ENCODE measurements at regions of chr18 and their contacts with region 1.

Region 1: GRCh38 chr18:49858309-49859020 is 45.1 kb upstream of the ACAA2 start:
- DNase-seq: peak in 4 of 5 donors; percentile 48 to 82 (median 56)
- ATAC-seq: peak; percentile 45 to 79 (median 57)
- H3K4me3 ChIP-seq: no peak overlapping the region
- H3K27ac ChIP-seq: no peak overlapping the region
- H3K4me1 ChIP-seq: peaks cover 0 to 5% (median 0%) of the 10 kb centered on the region in 12 donors
- H3K27me3 ChIP-seq: peaks cover 0 to 4% (median 0%) of the 10 kb centered on the region in 9 donors
- CTCF ChIP-seq: peak; percentile 75 to 96 (median 90)
- POLR2A ChIP-seq: no peak

Region 2: DNA sequence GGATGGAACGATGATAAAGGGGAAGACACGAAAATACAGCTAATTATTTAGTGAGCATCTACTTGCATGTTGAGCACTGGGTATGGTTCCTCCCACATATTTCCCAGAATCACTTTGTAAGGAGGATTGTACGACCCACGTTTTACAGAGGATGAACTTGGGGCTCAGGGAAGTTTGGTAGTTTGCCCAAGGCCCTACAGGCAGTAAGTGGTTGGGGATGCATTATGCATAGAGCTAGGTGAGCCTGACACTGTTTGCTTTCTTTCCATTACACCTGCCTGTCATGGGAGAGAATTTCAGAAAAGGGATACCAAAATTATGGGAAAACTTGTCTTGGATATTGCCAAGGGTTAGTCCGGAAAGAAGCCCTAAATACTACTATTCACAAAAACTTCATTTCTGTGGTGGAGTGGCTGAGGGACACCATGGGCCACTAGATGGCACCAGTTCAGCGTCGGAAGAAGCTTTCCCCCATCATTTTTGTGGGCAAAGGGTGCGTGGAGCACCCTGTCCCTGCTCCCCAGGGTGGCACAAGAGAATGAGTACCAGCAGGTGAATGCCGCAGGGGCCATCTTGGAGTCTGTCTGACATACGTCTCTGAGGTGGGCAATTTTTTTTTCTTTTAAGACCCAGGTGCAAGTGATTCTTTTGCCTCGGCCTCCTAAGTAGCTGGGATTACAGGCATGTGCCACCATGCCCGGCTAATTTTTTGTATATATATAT is 347.9 kb before region 1 on chr18:
- intact Hi-C with region 1: loop called (anchors 1 to 5 kb)
- DNase-seq: peak in 4 of 5 donors; percentile 31 to 64 (median 42)
- ATAC-seq: peak in 3 of 4 donors; percentile 52 to 72 (median 66)
- H3K4me3 ChIP-seq: no peak overlapping the region
- H3K27ac ChIP-seq: no peak overlapping the region
- H3K4me1 ChIP-seq: no peaks in the 10 kb centered on the region
- H3K27me3 ChIP-seq: peaks cover 0 to 6% (median 0%) of the 10 kb centered on the region in 9 donors
- CTCF ChIP-seq: peak; percentile 71 to 87 (median 81)
- POLR2A ChIP-seq: no peak

Region 3: GRCh38 chr18:49550621-49551339 is 307.7 kb before region 1 on chr18:
- intact Hi-C with region 1: loop called in 1 of 10 experiments (anchors 5 kb)
- DNase-seq: no peak
- ATAC-seq: no peak
- H3K4me3 ChIP-seq: no peak overlapping the region
- H3K27ac ChIP-seq: no peak overlapping the region
- H3K4me1 ChIP-seq: no peaks in the 10 kb centered on the region
- H3K27me3 ChIP-seq: peaks cover 0 to 18% (median 0%) of the 10 kb centered on the region in 9 donors
- CTCF ChIP-seq: no peak
- POLR2A ChIP-seq: no peak

Region 4: GRCh38 chr18:49561289-49562193 is 296.9 kb before region 1 on chr18 and contains the start of gene LIPG:
- intact Hi-C with region 1: loop called (anchors 1 to 5 kb)
- DNase-seq: peak in 4 of 5 donors; percentile 10 to 69 (median 36)
- ATAC-seq: peak in 3 of 4 donors; percentile 35 to 72 (median 45)
- H3K4me3 ChIP-seq: peak within 1 kb of the TSS; percentile 11 to 55 (median 40)
- H3K27ac ChIP-seq: no peak within 1 kb of the TSS
- H3K4me1 ChIP-seq: peaks cover 3 to 35% (median 21%) of the 10 kb centered on the region in 12 donors
- H3K27me3 ChIP-seq: peaks cover 12 to 53% (median 38%) of the 10 kb centered on the region in 9 donors
- CTCF ChIP-seq: no peak
- POLR2A ChIP-seq: no peak
- total RNA-seq, gene LIPG: 0.20 to 12.1 (median 1.1) TPM in 6 of 9 donors, not detected in the others

Region 5: DNA sequence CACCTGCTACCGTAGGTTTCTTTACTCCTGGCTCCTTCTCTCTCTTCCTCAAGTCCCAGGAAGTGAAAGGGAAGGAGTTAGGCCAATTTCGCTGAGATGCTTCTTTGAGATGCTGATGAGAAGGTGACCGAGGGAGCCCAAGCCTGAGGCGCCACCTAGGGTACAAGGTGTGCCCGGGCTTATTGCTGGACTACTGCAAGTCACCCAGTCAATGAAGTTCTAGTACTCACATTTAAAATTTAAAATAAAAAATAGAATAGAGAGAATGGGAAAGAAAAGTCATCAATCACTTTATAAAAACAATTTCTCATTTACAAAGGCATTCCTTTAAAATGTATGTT is 90.4 kb before region 1 on chr18:
- intact Hi-C with region 1: loop called in 2 of 10 experiments (anchors 10 kb)
- DNase-seq: peak in 2 of 5 donors; percentile 30 to 50
- ATAC-seq: peak; percentile 51 to 74 (median 64)
- H3K4me3 ChIP-seq: no peak overlapping the region
- H3K27ac ChIP-seq: no peak overlapping the region
- H3K4me1 ChIP-seq: no peaks in the 10 kb centered on the region
- H3K27me3 ChIP-seq: no peaks in the 10 kb centered on the region
- CTCF ChIP-seq: peak; percentile 20 to 60 (median 45)
- POLR2A ChIP-seq: no peak

Region 6: DNA sequence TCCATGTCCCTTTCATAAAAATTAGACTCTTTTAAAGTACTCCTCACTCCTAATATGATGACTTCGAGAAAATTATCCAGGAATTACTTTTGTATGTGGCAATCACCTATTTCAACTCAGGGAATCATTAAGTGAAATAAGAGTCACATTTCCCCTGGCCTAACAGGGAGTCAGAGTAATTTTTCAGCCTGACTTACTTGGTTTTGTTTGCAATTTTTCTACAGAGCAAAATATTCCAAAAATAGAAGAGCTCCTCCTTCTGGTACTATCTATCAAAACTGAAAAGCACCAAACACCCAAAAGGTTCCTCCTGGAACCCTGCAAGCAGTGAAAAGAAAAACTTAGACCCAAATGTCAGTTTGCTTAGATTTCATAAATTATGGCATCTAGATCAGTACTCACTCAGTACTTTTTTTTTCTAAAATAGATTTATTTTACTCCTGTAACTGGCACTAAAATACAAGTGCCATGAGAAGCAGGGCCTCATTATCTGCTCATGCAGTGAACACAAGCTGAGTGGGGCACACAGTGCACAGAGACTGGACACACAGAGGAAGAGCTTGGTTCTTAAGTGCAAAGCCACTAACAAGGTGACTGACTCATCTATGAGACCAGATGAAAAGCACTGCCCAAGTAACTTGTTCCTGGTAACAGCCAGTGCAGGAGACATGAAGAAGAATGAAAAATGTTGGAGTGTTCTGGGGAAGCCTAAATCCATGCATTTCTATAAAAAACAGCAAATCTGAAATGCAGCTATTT is 73.9 kb before region 1 on chr18:
- intact Hi-C with region 1: loop called in 2 of 10 experiments (anchors 5 kb)
- DNase-seq: no peak
- ATAC-seq: peak in 2 of 4 donors; percentile 28 to 36
- H3K4me3 ChIP-seq: no peak overlapping the region
- H3K27ac ChIP-seq: peak overlapping the region in 2 of 12 donors; percentile 35 to 44
- H3K4me1 ChIP-seq: peaks cover 0 to 10% (median 0%) of the 10 kb centered on the region in 12 donors
- H3K27me3 ChIP-seq: no peaks in the 10 kb centered on the region
- CTCF ChIP-seq: peak in 6 of 12 donors; percentile 12 to 39 (median 26)
- POLR2A ChIP-seq: no peak

Region 7: GRCh38 chr18:49980896-49981295 is 122.4 kb after region 1 on chr18:
- intact Hi-C with region 1: no loop called
- DNase-seq: no peak
- ATAC-seq: no peak
- H3K4me3 ChIP-seq: no peak overlapping the region
- H3K27ac ChIP-seq: no peak overlapping the region
- H3K4me1 ChIP-seq: peaks cover 0 to 9% (median 0%) of the 10 kb centered on the region in 12 donors
- H3K27me3 ChIP-seq: peaks cover 0 to 2% (median 0%) of the 10 kb centered on the region in 9 donors
- CTCF ChIP-seq: no peak
- POLR2A ChIP-seq: no peak

Region 8: GRCh38 chr18:50356036-50356945 is 497.8 kb after region 1 on chr18:
- intact Hi-C with region 1: loop called in 1 of 10 experiments (anchors 5 kb)
- DNase-seq: no peak
- ATAC-seq: peak in 3 of 4 donors; percentile 20 to 61 (median 49)
- H3K4me3 ChIP-seq: no peak overlapping the region
- H3K27ac ChIP-seq: peak overlapping the region in 1 of 12 donors; percentile 18
- H3K4me1 ChIP-seq: peaks cover 0 to 8% (median 0%) of the 10 kb centered on the region in 12 donors
- H3K27me3 ChIP-seq: peaks cover 0 to 13% (median 0%) of the 10 kb centered on the region in 9 donors
- CTCF ChIP-seq: peak in 1 of 12 donors; percentile 11
- POLR2A ChIP-seq: no peak